Activated CD4-positive, alpha-beta memory T cell treated with anti-CD3 and anti-CD28 coated beads, Interleukin-2, amount 10 ng/mL, durations not matched to agents 7 days and 5 days (primary cell): ENCODE measurements at regions of chr17 and their contacts with region 1.

Region 1: GRCh38 chr17:75845049-75845860 is 1.1 kb upstream of the UNC13D start:
- DNase-seq: peak; percentile 72
- H3K4me3 Mint-ChIP-seq: peak overlapping the region; percentile 56
- H3K27ac Mint-ChIP-seq: peak overlapping the region; percentile 81
- H3K4me1 Mint-ChIP-seq: peaks cover 33% of the 10 kb centered on the region
- H3K27me3 Mint-ChIP-seq: no peaks in the 10 kb centered on the region

Region 2: DNA sequence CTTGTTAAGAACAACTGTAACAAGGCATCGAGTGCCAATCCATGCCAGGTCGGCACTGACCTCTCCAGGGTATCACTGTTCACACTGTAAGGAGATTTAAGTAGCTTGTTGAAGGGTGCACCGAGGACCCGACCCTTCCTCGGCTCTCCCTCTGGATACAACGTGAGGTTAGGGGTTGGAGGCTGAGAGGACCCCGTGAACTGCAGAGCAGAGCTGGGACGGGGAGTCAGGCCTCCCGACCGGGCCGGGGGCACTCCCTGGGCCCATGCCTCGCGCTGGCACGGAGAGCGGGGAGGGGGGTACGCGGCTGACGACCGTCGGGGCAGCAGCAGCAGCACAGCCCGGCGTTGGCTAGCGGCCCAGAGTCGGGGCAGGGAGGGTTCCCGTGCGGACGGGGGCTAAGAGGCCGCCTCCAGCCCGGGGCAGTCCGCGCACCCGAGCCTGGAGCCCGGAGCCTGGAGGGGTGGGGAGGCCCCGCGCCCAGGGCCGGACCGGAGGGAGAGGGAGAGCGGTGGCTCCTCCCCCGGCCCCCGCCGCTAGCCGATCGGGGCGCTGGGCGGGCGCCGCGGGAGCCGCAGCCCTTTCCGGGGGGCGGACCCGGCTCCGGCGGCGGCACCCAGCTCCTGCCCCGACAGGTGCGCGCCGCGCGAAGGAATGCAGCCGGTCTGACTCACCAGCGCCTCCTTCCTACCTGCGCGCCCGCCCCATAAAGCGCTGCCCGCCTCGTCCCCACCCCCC is 124.4 kb before region 1 on chr17 and contains the start of gene ITGB4:
- CTCF ChIA-PET with region 1: no interaction called
- POLR2A ChIA-PET with region 1: no interaction called
- DNase-seq: peak; percentile 64
- H3K4me3 Mint-ChIP-seq: peak within 1 kb of the TSS; percentile 54
- H3K27ac Mint-ChIP-seq: no peak within 1 kb of the TSS
- H3K4me1 Mint-ChIP-seq: peaks cover 2% of the 10 kb centered on the region
- H3K27me3 Mint-ChIP-seq: peaks cover 24% of the 10 kb centered on the region
- total RNA-seq, gene ITGB4: 0.43 to 0.68 TPM

Region 3: DNA sequence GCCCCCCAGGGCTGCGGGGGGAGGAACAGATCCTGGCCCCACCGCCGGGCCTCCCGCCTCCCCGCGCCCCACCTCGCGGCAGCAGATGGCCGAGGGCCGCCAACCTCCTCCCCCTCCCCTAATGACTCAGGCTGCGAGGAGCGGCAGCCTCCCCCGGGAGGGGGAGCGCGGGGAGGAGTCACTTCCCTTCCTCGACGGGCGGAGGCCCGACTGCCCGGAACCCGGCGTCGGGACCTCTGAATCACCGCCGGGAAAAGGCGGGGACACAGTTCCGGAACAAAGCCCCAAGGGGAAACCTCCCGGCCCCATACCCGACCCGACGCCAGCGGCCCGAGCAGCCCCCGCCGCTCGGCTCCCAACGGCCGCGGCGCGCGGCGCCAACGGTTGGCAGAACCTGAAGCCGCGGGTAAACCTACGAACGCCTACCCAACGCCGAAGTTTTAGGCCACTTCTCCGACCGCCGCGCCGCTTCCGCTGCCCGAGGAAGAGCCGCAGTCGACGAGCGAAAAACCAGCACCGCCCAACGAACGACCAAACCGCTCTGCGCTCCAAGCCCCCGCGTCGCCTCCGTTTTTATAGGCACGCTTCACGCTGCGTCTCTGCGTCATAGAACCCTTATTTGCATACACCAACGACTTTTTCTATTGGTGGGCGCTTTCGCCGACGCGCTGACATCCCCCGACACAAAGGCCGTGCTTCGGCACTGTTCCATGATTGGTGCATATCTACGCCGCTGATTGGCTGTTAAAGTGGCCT is 65.8 kb before region 1 on chr17:
- CTCF ChIA-PET with region 1: interaction called, 8 read pairs
- POLR2A ChIA-PET with region 1: interaction called, 87 read pairs
- DNase-seq: peak; percentile 96
- H3K4me3 Mint-ChIP-seq: peak overlapping the region; percentile 88
- H3K27ac Mint-ChIP-seq: peak overlapping the region; percentile 96
- H3K4me1 Mint-ChIP-seq: peaks cover 58% of the 10 kb centered on the region
- H3K27me3 Mint-ChIP-seq: no peaks in the 10 kb centered on the region

Region 4: GRCh38 chr17:75822119-75822799 is 23.0 kb before region 1 on chr17:
- CTCF ChIA-PET with region 1: interaction called, 5 read pairs
- POLR2A ChIA-PET with region 1: interaction called, 31 read pairs
- DNase-seq: no peak
- H3K4me3 Mint-ChIP-seq: no peak overlapping the region
- H3K27ac Mint-ChIP-seq: peak overlapping the region; percentile 68
- H3K4me1 Mint-ChIP-seq: peaks cover 28% of the 10 kb centered on the region
- H3K27me3 Mint-ChIP-seq: no peaks in the 10 kb centered on the region

Region 5: GRCh38 chr17:75855310-75856081 is 10.2 kb after region 1 on chr17 and contains the start of gene WBP2:
- CTCF ChIA-PET with region 1: interaction called, 85 read pairs
- POLR2A ChIA-PET with region 1: interaction called, 69 read pairs
- DNase-seq: peak; percentile 98
- H3K4me3 Mint-ChIP-seq: no peak within 1 kb of the TSS
- H3K27ac Mint-ChIP-seq: peak within 1 kb of the TSS; percentile 85
- H3K4me1 Mint-ChIP-seq: peaks cover 43% of the 10 kb centered on the region
- H3K27me3 Mint-ChIP-seq: no peaks in the 10 kb centered on the region
- total RNA-seq, gene WBP2: 107 to 114 TPM

Region 6: GRCh38 chr17:75896415-75897159 is 51.3 kb after region 1 on chr17 and contains the start of gene TRIM65:
- CTCF ChIA-PET with region 1: interaction called, 4 read pairs
- POLR2A ChIA-PET with region 1: interaction called, 14 read pairs
- DNase-seq: peak; percentile 83
- H3K4me3 Mint-ChIP-seq: peak within 1 kb of the TSS; percentile 81
- H3K27ac Mint-ChIP-seq: peak within 1 kb of the TSS; percentile 74
- H3K4me1 Mint-ChIP-seq: peaks cover 24% of the 10 kb centered on the region
- H3K27me3 Mint-ChIP-seq: no peaks in the 10 kb centered on the region
- total RNA-seq, gene TRIM65: 24.9 to 26.1 TPM